Activated CD8-positive, alpha-beta T cell treated with anti-CD3 and anti-CD28 coated beads, Interleukin-2, amount 10 ng/mL, durations not matched to agents 7 days and 5 days (primary cell): ENCODE measurements at regions of chr17 and their contacts with region 1.

Region 1: GRCh38 chr17:8376271-8377067 is at the start of gene KRABD2:
- DNase-seq: peak; percentile 94
- ATAC-seq: peak; percentile 97
- H3K4me3 Mint-ChIP-seq: peak within 1 kb of the TSS; percentile 90
- H3K27ac Mint-ChIP-seq: peak within 1 kb of the TSS; percentile 78
- H3K4me1 Mint-ChIP-seq: peaks cover 61% of the 10 kb centered on the region
- H3K27me3 Mint-ChIP-seq: no peaks in the 10 kb centered on the region

Region 2: GRCh38 chr17:8320990-8321389 is 55.5 kb before region 1 on chr17:
- CTCF ChIA-PET with region 1: no interaction called
- POLR2A ChIA-PET with region 1: no interaction called
- DNase-seq: no peak
- ATAC-seq: no peak
- H3K4me3 Mint-ChIP-seq: no peak overlapping the region
- H3K27ac Mint-ChIP-seq: no peak overlapping the region
- H3K4me1 Mint-ChIP-seq: peaks cover 6% of the 10 kb centered on the region
- H3K27me3 Mint-ChIP-seq: peaks cover 16% of the 10 kb centered on the region

Region 3: DNA sequence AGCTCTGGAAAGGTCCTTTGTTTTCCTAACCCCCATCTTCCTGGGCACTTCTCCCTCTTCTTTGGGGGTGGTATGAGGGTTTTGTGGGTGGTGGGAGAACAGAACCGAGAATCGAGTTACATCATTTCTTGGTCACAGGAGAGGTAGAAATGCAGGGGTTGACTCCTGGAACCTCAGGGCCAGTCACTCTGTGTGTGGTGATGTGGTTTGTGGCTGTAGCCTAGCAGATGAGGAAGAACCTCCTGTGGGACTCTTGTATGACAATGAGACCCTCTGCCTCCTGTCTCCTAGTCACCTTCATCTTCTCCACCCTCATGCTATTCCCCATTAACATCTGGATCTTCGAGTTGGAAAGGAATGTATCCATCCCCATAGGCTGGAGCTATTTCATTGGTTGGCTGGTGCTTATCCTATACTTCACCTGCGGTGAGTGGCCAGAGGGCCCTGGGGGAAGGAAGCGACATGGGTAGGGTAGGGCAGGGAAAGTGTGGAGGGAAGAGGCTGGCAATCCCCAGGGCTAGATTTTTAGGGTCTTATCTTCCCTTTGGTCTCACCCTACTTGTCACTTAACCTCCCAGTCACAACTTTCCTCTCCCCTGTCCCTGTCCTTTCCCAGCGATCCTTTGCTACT is 31.3 kb before region 1 on chr17:
- CTCF ChIA-PET with region 1: no interaction called
- POLR2A ChIA-PET with region 1: no interaction called
- DNase-seq: peak; percentile 33
- ATAC-seq: peak; percentile 60
- H3K4me3 Mint-ChIP-seq: no peak overlapping the region
- H3K27ac Mint-ChIP-seq: no peak overlapping the region
- H3K4me1 Mint-ChIP-seq: peaks cover 14% of the 10 kb centered on the region
- H3K27me3 Mint-ChIP-seq: peaks cover 33% of the 10 kb centered on the region

Region 4: GRCh38 chr17:8359769-8360168 is 16.7 kb before region 1 on chr17:
- CTCF ChIA-PET with region 1: interaction called, 21 read pairs
- POLR2A ChIA-PET with region 1: interaction called, 3 read pairs
- DNase-seq: no peak
- ATAC-seq: no peak
- H3K4me3 Mint-ChIP-seq: no peak overlapping the region
- H3K27ac Mint-ChIP-seq: no peak overlapping the region
- H3K4me1 Mint-ChIP-seq: peaks cover 10% of the 10 kb centered on the region
- H3K27me3 Mint-ChIP-seq: no peaks in the 10 kb centered on the region

Region 5: GRCh38 chr17:8393420-8394241 is 17.2 kb after region 1 on chr17:
- CTCF ChIA-PET with region 1: interaction called, 12 read pairs
- POLR2A ChIA-PET with region 1: interaction called, 7 read pairs
- DNase-seq: peak; percentile 76
- ATAC-seq: peak; percentile 91
- H3K4me3 Mint-ChIP-seq: peak overlapping the region; percentile 20
- H3K27ac Mint-ChIP-seq: peak overlapping the region; percentile 96
- H3K4me1 Mint-ChIP-seq: peaks cover 20% of the 10 kb centered on the region
- H3K27me3 Mint-ChIP-seq: peaks cover 22% of the 10 kb centered on the region

Region 6: DNA sequence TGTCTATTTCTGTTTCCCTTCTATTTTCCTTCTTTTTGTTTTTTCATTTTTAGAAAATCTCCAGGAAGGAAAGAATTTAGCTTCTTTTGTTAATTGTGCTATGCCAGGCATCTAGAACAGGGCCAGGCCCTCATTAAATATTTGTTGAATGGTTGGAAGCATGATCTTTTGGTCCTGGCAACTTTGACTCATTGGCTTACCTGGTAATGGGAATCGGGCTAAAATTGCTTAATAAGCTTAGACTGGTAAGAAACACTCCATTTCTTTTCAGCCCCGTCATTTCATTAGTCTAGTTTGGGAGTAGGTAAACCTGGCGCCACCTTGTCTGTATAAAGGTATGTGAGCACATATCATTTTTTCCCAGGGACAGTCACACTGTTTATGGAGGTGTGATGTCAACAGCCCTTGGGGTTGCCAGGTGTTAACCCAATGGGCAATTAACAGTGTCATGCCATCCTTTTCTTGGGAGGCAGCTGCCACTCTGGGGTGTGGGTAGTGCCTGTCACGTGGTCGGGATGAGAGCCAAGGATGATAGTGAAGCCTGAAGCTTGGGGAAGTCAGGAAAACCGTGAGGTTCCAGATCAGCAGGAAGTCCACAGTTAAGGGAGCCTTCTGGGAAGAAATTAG is 49.7 kb after region 1 on chr17:
- CTCF ChIA-PET with region 1: no interaction called
- POLR2A ChIA-PET with region 1: no interaction called
- DNase-seq: no peak
- ATAC-seq: no peak
- H3K4me3 Mint-ChIP-seq: no peak overlapping the region
- H3K27ac Mint-ChIP-seq: no peak overlapping the region
- H3K4me1 Mint-ChIP-seq: no peaks in the 10 kb centered on the region
- H3K27me3 Mint-ChIP-seq: peaks cover 17% of the 10 kb centered on the region

Region 7: GRCh38 chr17:8443756-8444155 is 67.3 kb after region 1 on chr17:
- CTCF ChIA-PET with region 1: no interaction called
- POLR2A ChIA-PET with region 1: no interaction called
- DNase-seq: no peak
- ATAC-seq: no peak
- H3K4me3 Mint-ChIP-seq: no peak overlapping the region
- H3K27ac Mint-ChIP-seq: no peak overlapping the region
- H3K4me1 Mint-ChIP-seq: peaks cover 20% of the 10 kb centered on the region
- H3K27me3 Mint-ChIP-seq: no peaks in the 10 kb centered on the region